Uterus (tissue), 4 donors: ENCODE measurements at regions of chr17 and their contacts with region 1.

Region 1: GRCh38 chr17:76161619-76162266 is 20.7 kb upstream of the FOXJ1 start:
- DNase-seq: no peak
- H3K4me3 ChIP-seq: no peak overlapping the region
- H3K27ac ChIP-seq: no peak overlapping the region
- H3K4me1 ChIP-seq: no peaks in the 10 kb centered on the region
- H3K27me3 ChIP-seq: no peaks in the 10 kb centered on the region
- CTCF ChIP-seq: no peak
- POLR2A ChIP-seq: no peak

Region 2: GRCh38 chr17:76139801-76140660 is 21.7 kb before region 1 on chr17:
- intact Hi-C with region 1: loop called (anchors 2 kb)
- DNase-seq: no peak
- H3K4me3 ChIP-seq: no peak overlapping the region
- H3K27ac ChIP-seq: no peak overlapping the region
- H3K4me1 ChIP-seq: no peaks in the 10 kb centered on the region
- H3K27me3 ChIP-seq: peaks cover 22 to 33% of the 10 kb centered on the region in 2 donors
- CTCF ChIP-seq: no peak
- POLR2A ChIP-seq: peak in 1 of 2 donors; percentile 53